ENCODE measurements at regions of chr4 and their contacts with region 1.

Region 1: GRCh38 chr4:77600521-77601451 is 4.8 kb upstream of the CXCL13 start:
- DNase-seq: no peak
- ATAC-seq: no peak
- H3K4me3 ChIP-seq: no peak overlapping the region
- H3K27ac ChIP-seq: no peak overlapping the region
- H3K4me1 ChIP-seq: no peaks in the 10 kb centered on the region
- H3K27me3 ChIP-seq: peaks cover 0 to 2% (median 0%) of the 10 kb centered on the region in 9 donors
- CTCF ChIP-seq: peak; percentile 62 to 80 (median 73)
- POLR2A ChIP-seq: no peak

Region 2: DNA sequence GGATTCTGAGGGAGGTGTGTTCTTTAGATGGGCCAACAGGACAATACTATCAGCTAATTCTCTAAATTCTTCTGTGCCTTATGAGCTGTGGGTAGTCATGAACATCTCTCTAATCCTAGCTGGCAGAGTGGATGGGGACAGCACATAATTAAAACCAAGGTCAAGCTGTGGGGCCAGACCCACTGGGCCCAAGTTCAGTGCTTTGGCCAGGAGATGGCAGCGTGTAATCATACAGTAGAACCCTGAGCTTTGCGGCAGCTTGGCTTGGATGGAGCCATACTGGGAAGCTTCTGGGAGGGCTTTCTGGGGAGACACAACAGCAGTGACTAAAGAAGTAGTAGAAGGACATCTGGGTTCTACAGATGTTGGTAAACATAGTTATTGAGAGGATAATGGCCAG is 135.5 kb before region 1 on chr4:
- intact Hi-C with region 1: loop called in 8 of 10 experiments (anchors 2 to 10 kb)
- DNase-seq: no peak
- ATAC-seq: peak in 3 of 4 donors; percentile 36 to 44 (median 41)
- H3K4me3 ChIP-seq: no peak overlapping the region
- H3K27ac ChIP-seq: no peak overlapping the region
- H3K4me1 ChIP-seq: no peaks in the 10 kb centered on the region
- H3K27me3 ChIP-seq: no peaks in the 10 kb centered on the region
- CTCF ChIP-seq: peak; percentile 22 to 49 (median 35)
- POLR2A ChIP-seq: no peak

Region 3: GRCh38 chr4:77481856-77482255 is 118.9 kb before region 1 on chr4:
- intact Hi-C with region 1: loop called in 1 of 10 experiments (anchors 10 kb)
- DNase-seq: no peak
- ATAC-seq: no peak
- H3K4me3 ChIP-seq: no peak overlapping the region
- H3K27ac ChIP-seq: no peak overlapping the region
- H3K4me1 ChIP-seq: no peaks in the 10 kb centered on the region
- H3K27me3 ChIP-seq: no peaks in the 10 kb centered on the region
- CTCF ChIP-seq: no peak
- POLR2A ChIP-seq: no peak